Heart left ventricle (tissue), 16 donors: ENCODE measurements at regions of chr3 and their contacts with region 1.

Region 1: GRCh38 chr3:136752422-136753325 is 496 bp upstream of the STAG1 start:
- DNase-seq: peak; percentile 99 to 100 (median 99)
- ATAC-seq: peak; percentile 94 to 97 (median 95)
- H3K4me3 ChIP-seq: peak overlapping the region; percentile 55 to 95 (median 70)
- H3K27ac ChIP-seq: peak overlapping the region; percentile 93 to 100 (median 98)
- H3K4me1 ChIP-seq: peaks cover 0 to 41% (median 26%) of the 10 kb centered on the region in 12 donors
- H3K27me3 ChIP-seq: no peaks in the 10 kb centered on the region
- CTCF ChIP-seq: peak in 6 of 12 donors; percentile 1 to 50 (median 38)
- POLR2A ChIP-seq: peak in 1 of 2 donors; percentile 78

Region 2: DNA sequence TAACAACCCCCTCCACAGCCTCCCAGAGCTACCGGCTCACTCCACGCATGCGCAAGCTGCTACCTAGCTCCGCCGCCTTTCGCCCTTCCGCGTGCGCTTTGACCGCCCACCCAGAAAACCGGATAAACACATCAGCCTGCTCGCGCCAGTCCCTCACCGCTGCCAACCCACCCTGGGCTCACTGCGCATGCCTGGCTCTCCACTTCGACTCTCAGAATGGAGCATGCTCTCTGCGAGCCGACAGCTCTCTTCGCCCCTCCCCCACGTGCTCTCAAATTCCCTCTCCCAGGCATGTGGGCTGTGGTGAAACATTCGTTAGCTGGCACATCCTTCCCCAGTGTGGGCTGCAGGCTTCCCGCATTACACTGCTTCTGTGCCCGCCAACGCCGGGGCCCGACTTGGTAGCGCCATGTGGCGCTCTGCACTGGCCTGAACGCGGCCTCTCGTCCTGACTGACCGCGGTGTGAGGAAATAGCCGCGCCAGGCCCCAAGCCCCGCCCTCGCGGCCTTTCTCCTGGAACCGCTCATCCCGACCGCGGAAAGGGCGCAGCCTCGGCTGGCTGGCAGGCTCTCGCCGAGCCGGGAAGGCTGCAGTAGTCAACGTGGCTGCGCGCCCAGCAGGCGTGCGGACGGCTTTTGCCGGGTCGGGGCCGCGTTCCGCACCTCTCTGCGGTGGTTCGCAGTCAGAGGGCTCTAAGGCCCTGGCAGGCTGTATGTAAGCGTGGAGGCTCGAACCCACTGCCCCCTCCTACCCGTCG is 556.1 kb before region 1 on chr3:
- intact Hi-C with region 1: loop called in 4 of 10 experiments (anchors 5 to 10 kb)
- DNase-seq: peak; percentile 99
- ATAC-seq: peak; percentile 88 to 96 (median 92)
- H3K4me3 ChIP-seq: peak overlapping the region; percentile 71 to 98 (median 86)
- H3K27ac ChIP-seq: peak overlapping the region; percentile 95 to 100 (median 100)
- H3K4me1 ChIP-seq: peaks cover 3 to 38% (median 25%) of the 10 kb centered on the region in 12 donors
- H3K27me3 ChIP-seq: no peaks in the 10 kb centered on the region
- CTCF ChIP-seq: peak in 1 of 12 donors; percentile 5
- POLR2A ChIP-seq: peak in 1 of 2 donors; percentile 74

Region 3: DNA sequence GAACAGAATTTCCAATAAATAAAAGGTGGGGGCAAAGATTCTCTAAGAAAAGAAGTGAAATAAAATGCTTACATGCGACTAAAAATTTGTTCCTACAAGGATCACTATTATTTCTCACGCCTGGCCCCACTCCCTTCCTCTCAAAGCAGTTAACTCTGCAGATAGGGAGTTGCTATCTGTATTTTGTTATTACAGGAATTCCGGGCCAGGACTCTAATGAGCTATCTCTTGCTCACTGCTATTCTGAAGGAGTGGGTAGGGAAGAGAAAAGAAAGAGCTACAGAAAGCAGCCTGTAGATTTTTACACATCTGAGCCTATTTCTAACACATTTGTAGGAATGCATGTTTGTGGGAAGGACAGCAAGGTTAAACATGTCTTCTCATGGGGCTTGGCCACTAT is 362.1 kb before region 1 on chr3:
- intact Hi-C with region 1: loop called in 9 of 10 experiments (anchors 1 to 5 kb)
- DNase-seq: no peak
- ATAC-seq: peak in 2 of 4 donors; percentile 63 to 64
- H3K4me3 ChIP-seq: no peak overlapping the region
- H3K27ac ChIP-seq: peak overlapping the region in 1 of 12 donors; percentile 17
- H3K4me1 ChIP-seq: peaks cover 0 to 9% (median 0%) of the 10 kb centered on the region in 12 donors
- H3K27me3 ChIP-seq: no peaks in the 10 kb centered on the region
- CTCF ChIP-seq: no peak
- POLR2A ChIP-seq: no peak

Region 4: GRCh38 chr3:136559896-136560295 is 192.8 kb before region 1 on chr3:
- intact Hi-C with region 1: loop called in 1 of 10 experiments (anchors 10 kb)
- DNase-seq: no peak
- ATAC-seq: no peak
- H3K4me3 ChIP-seq: no peak overlapping the region
- H3K27ac ChIP-seq: no peak overlapping the region
- H3K4me1 ChIP-seq: peaks cover 0 to 7% (median 0%) of the 10 kb centered on the region in 12 donors
- H3K27me3 ChIP-seq: no peaks in the 10 kb centered on the region
- CTCF ChIP-seq: no peak
- POLR2A ChIP-seq: no peak

Region 5: GRCh38 chr3:136818769-136819391 is 66.2 kb after region 1 on chr3 and contains the start of gene SLC35G2:
- intact Hi-C with region 1: loop called in 2 of 10 experiments (anchors 1 to 2 kb)
- DNase-seq: peak; percentile 57 to 78 (median 77)
- ATAC-seq: peak; percentile 68 to 83 (median 78)
- H3K4me3 ChIP-seq: peak within 1 kb of the TSS; percentile 63 to 92 (median 77)
- H3K27ac ChIP-seq: peak within 1 kb of the TSS; percentile 73 to 97 (median 88)
- H3K4me1 ChIP-seq: peaks cover 0 to 32% (median 8%) of the 10 kb centered on the region in 12 donors
- H3K27me3 ChIP-seq: peaks cover 0 to 17% (median 0%) of the 10 kb centered on the region in 9 donors
- CTCF ChIP-seq: peak in 2 of 12 donors; percentile 9 to 23
- POLR2A ChIP-seq: no peak
- total RNA-seq, gene SLC35G2: 1.0 to 5.3 (median 3.6) TPM

Region 6: DNA sequence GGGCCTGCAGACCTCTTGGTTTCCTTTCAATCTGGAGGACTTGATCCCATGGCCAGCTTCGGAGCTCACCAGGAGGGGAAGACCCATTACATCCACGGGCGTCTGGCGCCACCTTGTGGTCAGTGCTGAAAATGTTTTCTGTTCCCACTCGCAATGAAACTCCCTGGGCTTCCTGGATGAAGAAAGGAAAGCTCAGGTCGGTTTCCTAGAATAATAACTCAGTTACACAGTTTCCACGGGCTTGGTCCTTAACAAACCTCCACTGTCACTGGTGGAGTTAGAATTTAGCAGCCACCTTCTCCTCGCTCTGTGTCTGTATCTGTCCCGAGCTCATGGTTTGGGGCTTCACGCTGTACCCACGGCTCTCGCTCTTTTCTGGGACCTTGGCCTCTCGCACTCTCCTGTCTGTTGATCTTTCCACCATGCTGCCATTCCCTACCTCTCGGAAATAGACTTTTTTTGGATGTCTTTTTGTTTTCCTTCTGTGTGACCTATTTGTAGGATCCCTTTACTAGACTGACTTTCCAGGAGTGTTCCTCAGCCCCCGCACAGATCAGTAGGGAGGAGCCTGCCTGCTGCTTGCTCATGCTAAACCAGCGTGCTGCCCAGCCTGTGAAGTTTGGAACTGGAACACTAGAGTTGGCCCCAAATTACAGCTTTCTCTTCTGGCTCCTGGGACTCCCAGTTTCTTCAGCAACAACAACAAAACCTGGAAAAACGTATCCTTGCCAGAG is 261.4 kb after region 1 on chr3:
- intact Hi-C with region 1: loop called (anchors 1 to 5 kb)
- DNase-seq: peak; percentile 88 to 92 (median 90)
- ATAC-seq: peak; percentile 93 to 98 (median 96)
- H3K4me3 ChIP-seq: peak overlapping the region in 11 of 12 donors; percentile 21 to 62 (median 55)
- H3K27ac ChIP-seq: peak overlapping the region in 10 of 12 donors; percentile 0 to 87 (median 56)
- H3K4me1 ChIP-seq: peaks cover 0 to 18% (median 6%) of the 10 kb centered on the region in 12 donors
- H3K27me3 ChIP-seq: no peaks in the 10 kb centered on the region
- CTCF ChIP-seq: peak; percentile 82 to 95 (median 91)
- POLR2A ChIP-seq: no peak